ENCODE measurements at regions of chr11 and their contacts with region 1.

Region 1: DNA sequence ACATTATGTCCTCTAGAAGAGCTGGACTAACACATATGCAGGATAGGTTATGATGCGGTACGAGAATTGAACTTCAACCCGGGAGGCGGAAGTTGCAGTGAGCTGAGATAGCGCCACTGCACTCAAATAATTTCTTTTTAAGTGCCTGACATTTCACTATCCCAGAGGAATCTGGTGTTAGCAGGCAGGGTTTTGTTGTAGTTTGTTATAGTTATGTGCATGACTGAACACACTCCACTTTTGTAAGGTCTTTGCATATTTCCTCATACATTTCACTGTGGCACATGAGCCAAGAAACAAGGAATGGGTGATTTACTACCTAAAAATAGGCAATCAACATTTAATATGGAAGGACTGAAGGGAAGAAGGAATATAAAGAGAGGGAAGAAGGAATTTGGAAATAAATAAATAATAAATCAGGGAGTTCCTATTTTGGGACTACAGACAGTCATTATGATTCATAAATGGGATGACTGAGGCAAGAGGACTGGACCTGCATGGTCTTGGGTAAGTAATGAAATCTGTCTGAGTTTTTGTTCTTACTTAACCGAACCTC is 8.7 kb upstream of the HIPK3 start:
- DNase-seq: no peak
- ATAC-seq: no peak
- H3K4me3 ChIP-seq: no peak overlapping the region
- H3K27ac ChIP-seq: no peak overlapping the region
- H3K4me1 ChIP-seq: no peaks in the 10 kb centered on the region
- H3K27me3 ChIP-seq: no peaks in the 10 kb centered on the region
- CTCF ChIP-seq: no peak
- POLR2A ChIP-seq: no peak

Region 2: GRCh38 chr11:33179348-33179803 is 69.1 kb before region 1 on chr11:
- intact Hi-C with region 1: loop called in 1 of 10 experiments (anchors 5 kb)
- DNase-seq: no peak
- ATAC-seq: peak in 1 of 4 donors; percentile 22
- H3K4me3 ChIP-seq: no peak overlapping the region
- H3K27ac ChIP-seq: peak overlapping the region in 2 of 12 donors; percentile 4 to 58
- H3K4me1 ChIP-seq: peaks cover 0 to 24% (median 0%) of the 10 kb centered on the region in 12 donors
- H3K27me3 ChIP-seq: no peaks in the 10 kb centered on the region
- CTCF ChIP-seq: no peak
- POLR2A ChIP-seq: no peak

Region 3: GRCh38 chr11:33344611-33345010 is 96.1 kb after region 1 on chr11:
- intact Hi-C with region 1: no loop called
- DNase-seq: no peak
- ATAC-seq: peak in 3 of 4 donors; percentile 46 to 73 (median 63)
- H3K4me3 ChIP-seq: no peak overlapping the region
- H3K27ac ChIP-seq: no peak overlapping the region
- H3K4me1 ChIP-seq: peaks cover 0 to 10% (median 0%) of the 10 kb centered on the region in 12 donors
- H3K27me3 ChIP-seq: no peaks in the 10 kb centered on the region
- CTCF ChIP-seq: peak in 6 of 12 donors; percentile 9 to 41 (median 22)
- POLR2A ChIP-seq: no peak

Measured in heart left ventricle (tissue), 16 donors.